Caco-2 (cell line): ENCODE measurements at regions of chr1 and their contacts with region 1.

Region 1: DNA sequence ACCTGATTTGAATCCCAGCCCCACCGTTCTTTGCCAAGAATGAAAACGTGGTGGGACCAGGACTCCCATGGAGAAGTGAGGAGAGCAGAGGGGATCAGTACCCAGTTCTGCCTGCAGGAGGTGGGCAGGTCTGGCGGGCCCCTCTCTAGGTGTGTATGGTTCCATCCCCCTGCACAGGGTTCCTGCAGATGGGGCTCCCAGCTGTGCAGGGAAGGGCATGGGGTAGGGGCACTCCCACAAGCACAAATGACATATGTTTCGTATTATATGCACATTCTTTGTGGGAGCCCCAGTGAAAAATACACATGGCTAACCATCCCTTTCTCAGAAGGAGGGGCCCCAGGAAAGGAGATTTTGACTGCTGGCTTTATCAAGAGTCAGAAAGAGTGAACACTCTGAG is 144.6 kb downstream of the PLPP3 start:
- DNase-seq: peak in 1 of 2 experiments; percentile 36
- H3K4me3 ChIP-seq: no peak overlapping the region
- H3K4me3 Mint-ChIP-seq: peak overlapping the region; percentile 25
- H3K27ac Mint-ChIP-seq: peak overlapping the region; percentile 92
- H3K4me1 ChIP-seq: peaks cover 70% of the 10 kb centered on the region
- H3K4me1 Mint-ChIP-seq: peaks cover 62% of the 10 kb centered on the region
- H3K27me3 ChIP-seq: no peaks in the 10 kb centered on the region
- H3K27me3 Mint-ChIP-seq: no peaks in the 10 kb centered on the region
- CTCF ChIP-seq: no peak

Region 2: GRCh38 chr1:56452027-56453011 is 17.6 kb after region 1 on chr1:
- CTCF ChIA-PET with region 1: interaction called, 4 read pairs
- POLR2A ChIA-PET with region 1: no interaction called
- intact Hi-C with region 1: loop called (anchors 2 kb)
- DNase-seq: no peak
- H3K4me3 ChIP-seq: no peak overlapping the region
- H3K4me3 Mint-ChIP-seq: no peak overlapping the region
- H3K27ac Mint-ChIP-seq: peak overlapping the region; percentile 36
- H3K4me1 ChIP-seq: peaks cover 62% of the 10 kb centered on the region
- H3K4me1 Mint-ChIP-seq: peaks cover 34% of the 10 kb centered on the region
- H3K27me3 ChIP-seq: no peaks in the 10 kb centered on the region
- H3K27me3 Mint-ChIP-seq: no peaks in the 10 kb centered on the region
- CTCF ChIP-seq: no peak

Region 3: DNA sequence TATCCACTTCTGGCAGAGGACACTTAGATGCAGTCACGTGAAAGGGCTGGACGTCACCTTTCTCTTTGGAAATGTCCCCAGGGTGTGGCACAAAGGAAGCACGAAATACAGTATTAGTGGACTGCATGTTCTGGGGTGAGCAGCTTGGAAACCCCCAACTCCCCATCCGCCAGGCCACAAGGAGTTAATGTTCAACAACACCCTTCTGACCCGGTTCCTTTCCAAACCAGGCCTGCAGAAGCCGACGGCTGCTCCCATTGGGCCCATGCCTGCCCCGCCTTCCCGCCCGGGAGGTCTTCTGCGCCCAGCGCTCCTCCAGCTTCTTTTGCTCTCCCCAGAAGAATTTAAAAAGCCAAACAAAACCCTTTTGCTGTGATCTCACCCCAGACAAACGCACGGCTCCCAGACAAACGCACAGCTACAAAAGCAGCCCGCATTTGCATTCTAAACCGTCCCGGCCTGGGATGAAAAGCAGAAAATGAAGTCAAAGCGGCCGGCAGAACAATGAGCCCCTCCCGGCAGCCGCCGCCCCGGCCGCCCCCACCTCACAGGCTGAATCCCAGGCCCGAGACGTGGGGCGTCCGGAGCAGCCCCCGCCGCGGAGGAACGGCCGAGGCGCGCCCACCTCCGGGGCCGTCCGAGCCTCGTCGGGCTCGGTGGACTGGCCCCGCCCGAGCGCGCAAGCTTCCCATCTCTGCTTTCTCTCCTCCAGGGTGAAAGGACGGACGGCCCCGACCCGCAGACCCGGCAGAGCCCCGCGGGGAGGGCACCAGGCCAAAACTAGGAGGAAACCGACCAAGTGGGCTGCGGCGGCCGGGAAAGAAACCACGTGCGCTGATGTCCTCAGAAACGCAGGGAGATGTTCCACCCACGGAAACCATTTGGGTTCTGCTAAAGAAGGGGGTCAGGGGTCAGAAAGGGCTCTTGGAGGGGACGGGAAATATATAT is 42.7 kb after region 1 on chr1:
- CTCF ChIA-PET with region 1: interaction called, 3 read pairs
- POLR2A ChIA-PET with region 1: interaction called, 5 read pairs
- intact Hi-C with region 1: loop called (anchors 5 kb)
- DNase-seq: peak; percentile 69 to 77
- H3K4me3 ChIP-seq: peak overlapping the region; percentile 47
- H3K4me3 Mint-ChIP-seq: peak overlapping the region; percentile 78
- H3K27ac Mint-ChIP-seq: peak overlapping the region; percentile 91
- H3K4me1 ChIP-seq: peaks cover 30% of the 10 kb centered on the region
- H3K4me1 Mint-ChIP-seq: peaks cover 18% of the 10 kb centered on the region
- H3K27me3 ChIP-seq: no peaks in the 10 kb centered on the region
- H3K27me3 Mint-ChIP-seq: no peaks in the 10 kb centered on the region
- CTCF ChIP-seq: no peak